Natural killer cell (primary cell): ENCODE measurements at regions of chr14 and their contacts with region 1.

Region 1: DNA sequence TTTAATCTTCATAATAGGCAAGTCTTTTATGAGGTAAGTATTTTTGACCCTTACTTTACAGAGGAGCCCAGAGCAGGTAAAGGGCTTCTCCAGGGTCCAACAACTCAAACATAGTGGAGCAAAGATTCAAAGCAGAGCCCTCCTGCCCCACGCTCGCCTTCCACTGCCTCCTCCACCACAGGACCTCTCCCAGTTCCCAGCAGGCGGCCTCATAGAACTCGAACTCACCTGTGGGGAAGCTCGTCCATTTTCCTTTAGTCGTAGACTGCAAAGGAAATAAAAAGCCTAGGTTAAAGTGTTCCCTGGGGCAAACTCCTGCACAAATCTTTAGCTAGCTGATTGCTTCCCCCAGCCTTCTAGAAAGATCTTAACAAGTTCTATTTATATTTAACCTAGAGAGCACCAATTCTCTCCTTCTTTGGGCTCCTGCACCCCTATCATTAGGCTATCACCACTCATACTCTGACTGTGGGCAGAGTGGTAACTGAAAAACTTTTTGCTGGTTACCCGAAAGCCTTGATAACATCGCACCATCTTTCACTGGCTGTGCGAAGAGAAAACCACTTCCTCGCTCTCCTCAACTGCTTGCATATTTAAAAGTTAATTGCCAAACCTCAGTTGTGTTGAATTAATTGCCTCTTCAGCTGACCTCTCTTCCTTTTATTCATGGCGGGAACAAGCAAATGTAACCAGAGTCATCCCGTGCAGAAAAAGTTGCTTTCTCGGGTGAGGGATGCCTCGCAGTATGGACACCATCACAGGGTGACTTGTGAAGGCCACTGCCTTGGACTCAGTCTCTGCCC is 299.6 kb downstream of the DPF3 start:
- DNase-seq: peak; percentile 44 to 74
- ATAC-seq: peak; percentile 86 to 96 (median 88)
- H3K4me3 ChIP-seq: no peak overlapping the region
- H3K4me3 Mint-ChIP-seq: peak overlapping the region; percentile 77
- H3K27ac ChIP-seq: no peak overlapping the region
- H3K27ac Mint-ChIP-seq: peak overlapping the region; percentile 19 to 28
- H3K4me1 ChIP-seq: peaks cover 50% of the 10 kb centered on the region
- H3K4me1 Mint-ChIP-seq: peaks cover 54 to 56% of the 10 kb centered on the region in 2 donors
- H3K27me3 ChIP-seq: peaks cover 49% of the 10 kb centered on the region
- H3K27me3 Mint-ChIP-seq: peaks cover 72% of the 10 kb centered on the region in 2 donors
- CTCF ChIP-seq: no peak

Region 2: DNA sequence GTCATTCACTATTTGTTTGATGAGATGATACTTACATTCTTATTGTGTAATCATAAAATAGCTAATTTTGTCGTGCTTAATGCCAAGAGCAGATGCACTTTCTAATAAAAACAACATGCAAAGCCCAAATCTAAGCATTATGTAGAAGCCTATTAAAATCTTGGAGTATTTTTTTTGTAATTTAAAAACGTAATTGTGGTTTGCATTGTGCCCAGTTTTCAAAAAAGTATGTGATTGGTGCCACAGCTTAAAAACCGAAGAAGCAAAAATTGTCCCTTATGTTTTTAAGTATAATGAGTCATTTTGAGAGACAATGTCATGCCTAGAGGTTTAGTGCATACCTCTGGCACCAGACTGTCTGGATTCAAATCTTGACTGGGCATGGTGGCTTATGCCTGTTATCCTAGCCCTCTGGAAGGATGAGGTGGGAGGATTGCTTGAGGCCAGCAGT is 1126.9 kb before region 1 on chr14:
- intact Hi-C with region 1: no loop called
- DNase-seq: no peak
- ATAC-seq: no peak
- H3K4me3 ChIP-seq: no peak overlapping the region
- H3K4me3 Mint-ChIP-seq: no peak overlapping the region
- H3K27ac ChIP-seq: no peak overlapping the region
- H3K27ac Mint-ChIP-seq: no peak overlapping the region
- H3K4me1 ChIP-seq: no peaks in the 10 kb centered on the region
- H3K4me1 Mint-ChIP-seq: peaks cover 5 to 22% of the 10 kb centered on the region in 2 donors
- H3K27me3 ChIP-seq: no peaks in the 10 kb centered on the region
- H3K27me3 Mint-ChIP-seq: no peaks in the 10 kb centered on the region
- CTCF ChIP-seq: no peak

Region 3: DNA sequence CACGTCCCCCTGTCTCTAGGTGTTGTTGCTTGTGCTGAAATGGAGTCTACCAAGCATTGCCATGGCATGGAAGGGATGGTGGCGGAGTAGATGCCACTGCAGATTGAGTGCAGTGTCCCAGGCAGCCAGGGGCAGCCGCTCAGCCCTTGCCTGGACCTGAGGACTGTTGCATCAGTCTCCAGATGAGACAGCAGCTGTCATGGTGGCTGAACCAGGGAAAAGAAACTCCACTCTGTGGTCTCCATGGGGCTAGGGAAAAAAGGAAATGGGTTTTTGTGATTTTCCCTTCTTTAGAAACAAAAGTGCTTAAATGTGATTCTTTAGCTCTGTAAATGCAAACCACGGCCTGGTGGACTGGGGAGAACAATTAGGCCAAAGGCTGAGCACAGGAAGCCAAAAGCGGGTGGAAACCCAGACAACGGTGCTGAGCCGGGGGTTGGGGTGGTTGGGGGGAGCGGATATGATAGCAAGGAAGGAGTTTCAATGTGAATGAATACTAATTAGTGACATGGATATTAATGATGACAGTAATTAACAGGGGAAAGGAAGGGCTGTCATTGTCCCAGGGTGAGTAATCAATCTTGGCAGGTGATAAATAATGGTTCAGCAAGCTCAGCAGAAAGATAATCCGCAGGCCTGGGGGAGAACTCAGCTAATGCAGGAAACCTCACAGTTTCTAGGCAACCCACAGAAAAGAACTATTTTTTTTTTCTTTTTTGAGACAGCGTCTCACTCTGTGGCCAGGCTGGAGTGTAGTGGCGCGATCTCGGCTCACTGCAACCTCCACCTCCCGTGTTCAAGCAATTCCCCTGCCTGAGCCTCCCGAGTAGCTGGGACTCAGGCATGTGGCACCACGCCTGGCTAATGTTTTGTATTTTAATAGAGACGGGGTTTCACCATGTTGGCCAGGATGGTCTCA is 143.0 kb before region 1 on chr14:
- intact Hi-C with region 1: loop called (anchors 5 kb)
- DNase-seq: peak; percentile 40 to 71
- ATAC-seq: peak; percentile 79 to 90 (median 85)
- H3K4me3 ChIP-seq: peak overlapping the region; percentile 3
- H3K4me3 Mint-ChIP-seq: peak overlapping the region; percentile 73
- H3K27ac ChIP-seq: peak overlapping the region; percentile 77
- H3K27ac Mint-ChIP-seq: peak overlapping the region; percentile 90 to 95
- H3K4me1 ChIP-seq: peaks cover 33% of the 10 kb centered on the region
- H3K4me1 Mint-ChIP-seq: peaks cover 36 to 37% of the 10 kb centered on the region in 2 donors
- H3K27me3 ChIP-seq: no peaks in the 10 kb centered on the region
- H3K27me3 Mint-ChIP-seq: no peaks in the 10 kb centered on the region
- CTCF ChIP-seq: no peak

Region 4: GRCh38 chr14:72525087-72525915 is 69.0 kb before region 1 on chr14:
- intact Hi-C with region 1: no loop called
- DNase-seq: no peak
- ATAC-seq: peak; percentile 25 to 81 (median 76)
- H3K4me3 ChIP-seq: no peak overlapping the region
- H3K4me3 Mint-ChIP-seq: peak overlapping the region; percentile 40
- H3K27ac ChIP-seq: no peak overlapping the region
- H3K27ac Mint-ChIP-seq: no peak overlapping the region
- H3K4me1 ChIP-seq: peaks cover 39% of the 10 kb centered on the region
- H3K4me1 Mint-ChIP-seq: peaks cover 54 to 58% of the 10 kb centered on the region in 2 donors
- H3K27me3 ChIP-seq: peaks cover 13% of the 10 kb centered on the region
- H3K27me3 Mint-ChIP-seq: peaks cover 65 to 81% of the 10 kb centered on the region in 2 donors
- CTCF ChIP-seq: no peak

Region 5: GRCh38 chr14:72714094-72714493 is 119.8 kb after region 1 on chr14:
- intact Hi-C with region 1: loop called (anchors 2 kb)
- DNase-seq: peak; percentile 68 to 70
- ATAC-seq: peak; percentile 69 to 95 (median 74)
- H3K4me3 ChIP-seq: no peak overlapping the region
- H3K4me3 Mint-ChIP-seq: peak overlapping the region; percentile 77
- H3K27ac ChIP-seq: no peak overlapping the region
- H3K27ac Mint-ChIP-seq: peak overlapping the region; percentile 6 to 83
- H3K4me1 ChIP-seq: peaks cover 56% of the 10 kb centered on the region
- H3K4me1 Mint-ChIP-seq: peaks cover 42 to 64% of the 10 kb centered on the region in 2 donors
- H3K27me3 ChIP-seq: no peaks in the 10 kb centered on the region
- H3K27me3 Mint-ChIP-seq: peaks cover 16 to 29% of the 10 kb centered on the region in 2 donors
- CTCF ChIP-seq: no peak

Region 6: DNA sequence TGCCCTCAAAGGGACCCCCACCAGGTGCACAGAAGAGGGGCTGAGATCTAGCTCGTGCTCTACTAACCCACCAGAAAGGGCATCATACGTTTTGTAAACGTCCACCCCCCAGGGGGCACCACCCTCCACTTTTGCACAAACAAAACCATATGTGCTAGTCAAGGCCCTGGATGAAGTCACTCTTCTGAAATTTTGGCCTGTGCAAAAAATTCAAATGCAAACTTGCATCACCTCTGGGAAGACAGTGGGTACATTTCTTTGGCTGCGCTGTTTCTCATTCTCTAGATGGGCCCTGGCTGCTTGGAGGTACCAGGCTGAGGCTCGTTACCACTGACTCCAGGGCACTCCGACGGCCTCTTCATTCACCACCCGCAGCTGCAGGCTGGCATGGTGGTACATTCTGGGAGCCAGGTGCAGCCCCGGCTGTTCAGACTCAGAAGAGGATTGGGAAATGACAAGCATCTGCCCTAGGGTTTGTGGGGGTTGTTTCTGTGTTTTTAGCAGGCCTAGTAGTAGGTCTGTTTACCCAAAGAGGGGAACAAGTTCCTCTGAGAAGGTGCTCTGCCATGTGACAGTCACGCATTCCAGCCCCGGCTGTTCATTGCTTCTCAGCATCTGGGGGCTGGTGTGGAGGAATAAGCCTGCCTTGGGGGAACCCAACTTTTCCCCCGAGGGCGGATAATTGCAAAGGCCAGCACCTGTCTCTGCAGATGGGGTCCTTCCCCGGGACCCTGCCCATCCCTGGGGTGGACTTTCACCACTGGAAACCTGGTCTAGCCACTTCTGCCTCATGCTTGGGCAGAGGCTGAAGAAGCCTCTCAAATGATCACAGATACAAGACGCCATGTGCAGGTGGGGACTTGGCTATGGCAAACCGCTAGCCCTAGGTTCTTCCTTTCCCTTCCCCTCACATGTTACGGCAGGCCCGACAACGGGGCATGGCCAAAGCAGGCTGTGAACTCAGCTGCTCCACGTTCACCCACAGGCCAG is 152.0 kb after region 1 on chr14:
- intact Hi-C with region 1: no loop called
- DNase-seq: no peak
- ATAC-seq: no peak
- H3K4me3 ChIP-seq: no peak overlapping the region
- H3K4me3 Mint-ChIP-seq: no peak overlapping the region
- H3K27ac ChIP-seq: no peak overlapping the region
- H3K27ac Mint-ChIP-seq: no peak overlapping the region
- H3K4me1 ChIP-seq: no peaks in the 10 kb centered on the region
- H3K4me1 Mint-ChIP-seq: no peaks in the 10 kb centered on the region
- H3K27me3 ChIP-seq: no peaks in the 10 kb centered on the region
- H3K27me3 Mint-ChIP-seq: peaks cover 0 to 7% of the 10 kb centered on the region in 2 donors
- CTCF ChIP-seq: no peak

Region 7: DNA sequence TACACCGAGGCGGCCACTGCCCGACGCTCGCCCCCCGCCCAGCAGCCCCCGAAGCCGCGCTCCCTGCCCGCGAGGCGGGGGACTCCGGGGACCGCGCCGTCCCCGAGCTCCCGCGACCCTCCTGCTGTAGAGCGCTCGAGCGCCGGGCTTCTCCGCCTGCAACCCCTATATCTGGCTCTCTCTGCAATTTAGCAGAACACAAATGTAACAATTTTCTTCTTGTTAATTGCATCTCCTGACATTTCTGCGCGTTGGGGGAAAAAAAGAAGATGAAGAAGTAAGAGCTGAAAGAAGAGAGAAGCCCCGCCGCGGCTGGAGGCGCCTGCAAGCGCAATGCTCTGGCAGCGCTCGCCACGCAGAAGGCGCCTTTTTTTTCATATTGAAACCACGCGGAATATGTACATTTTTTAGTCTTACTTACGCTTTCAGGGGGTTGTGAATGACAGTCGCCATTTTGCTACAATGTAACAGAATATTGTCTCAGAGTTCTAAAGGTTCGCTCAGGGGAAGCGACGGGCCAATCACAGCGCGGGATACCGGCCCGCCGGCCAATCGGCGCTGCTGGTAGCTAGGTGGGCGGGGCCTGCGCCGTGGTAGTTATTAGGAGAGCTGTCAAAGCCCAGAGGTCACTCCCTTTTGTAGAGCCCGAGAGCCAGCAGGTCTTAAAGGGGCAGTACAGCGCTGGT is 299.5 kb after region 1 on chr14 and contains the start of gene DPF3:
- intact Hi-C with region 1: loop called (anchors 5 kb)
- DNase-seq: peak; percentile 93 to 94
- ATAC-seq: peak; percentile 95 to 99 (median 98)
- H3K4me3 ChIP-seq: peak within 1 kb of the TSS; percentile 65
- H3K4me3 Mint-ChIP-seq: peak within 1 kb of the TSS; percentile 97
- H3K27ac ChIP-seq: no peak within 1 kb of the TSS
- H3K27ac Mint-ChIP-seq: peak within 1 kb of the TSS; percentile 81
- H3K4me1 ChIP-seq: peaks cover 28% of the 10 kb centered on the region
- H3K4me1 Mint-ChIP-seq: peaks cover 26 to 29% of the 10 kb centered on the region in 2 donors
- H3K27me3 ChIP-seq: peaks cover 38% of the 10 kb centered on the region
- H3K27me3 Mint-ChIP-seq: peaks cover 42 to 63% of the 10 kb centered on the region in 2 donors
- CTCF ChIP-seq: no peak
- total RNA-seq, gene DPF3: 1.4 to 1.8 (median 1.4) TPM

Region 8: GRCh38 chr14:73627151-73627558 is 1032.9 kb after region 1 on chr14:
- intact Hi-C with region 1: no loop called
- DNase-seq: no peak
- ATAC-seq: no peak
- H3K4me3 ChIP-seq: no peak overlapping the region
- H3K4me3 Mint-ChIP-seq: no peak overlapping the region
- H3K27ac ChIP-seq: no peak overlapping the region
- H3K27ac Mint-ChIP-seq: no peak overlapping the region
- H3K4me1 ChIP-seq: no peaks in the 10 kb centered on the region
- H3K4me1 Mint-ChIP-seq: no peaks in the 10 kb centered on the region
- H3K27me3 ChIP-seq: no peaks in the 10 kb centered on the region
- H3K27me3 Mint-ChIP-seq: peaks cover 0 to 8% of the 10 kb centered on the region in 2 donors
- CTCF ChIP-seq: no peak